Adrenal gland (tissue), 19 donors: ENCODE measurements at regions of chr12 and their contacts with region 1.

Region 1: GRCh38 chr12:56518570-56518969 is 3.0 kb upstream of the RBMS2 start:
- DNase-seq: no peak
- H3K4me3 ChIP-seq: no peak overlapping the region
- H3K27ac ChIP-seq: no peak overlapping the region
- H3K4me1 ChIP-seq: peaks cover 10 to 32% of the 10 kb centered on the region in 2 donors
- H3K27me3 ChIP-seq: no peaks in the 10 kb centered on the region
- CTCF ChIP-seq: no peak
- POLR2A ChIP-seq: no peak

Region 2: DNA sequence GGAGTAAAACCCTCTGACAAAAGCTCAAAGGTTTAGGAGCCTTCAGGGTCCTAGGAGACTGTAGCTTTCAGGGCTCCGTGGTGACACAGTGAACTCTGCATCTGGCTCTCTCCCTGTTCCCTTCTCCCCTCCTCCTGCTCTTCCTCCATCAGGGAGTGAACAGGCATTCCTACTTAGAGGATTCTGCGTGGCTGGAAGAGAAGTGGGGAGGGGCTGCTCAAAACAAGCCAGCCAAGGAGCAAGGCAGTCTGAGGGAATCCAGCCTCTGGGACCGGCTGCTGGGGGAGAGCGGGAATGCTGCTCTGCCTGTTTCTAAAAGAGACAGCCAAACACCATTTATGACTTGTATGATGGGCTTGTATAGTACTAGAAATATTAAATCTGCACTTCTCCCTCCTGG is 52.6 kb after region 1 on chr12:
- intact Hi-C with region 1: loop called in 1 of 2 experiments (anchors 5 kb)
- DNase-seq: no peak
- H3K4me3 ChIP-seq: no peak overlapping the region
- H3K27ac ChIP-seq: peak overlapping the region in 2 of 5 donors; percentile 26 to 35
- H3K4me1 ChIP-seq: peaks cover 3 to 9% of the 10 kb centered on the region in 2 donors
- H3K27me3 ChIP-seq: no peaks in the 10 kb centered on the region
- CTCF ChIP-seq: no peak
- POLR2A ChIP-seq: no peak

Region 3: DNA sequence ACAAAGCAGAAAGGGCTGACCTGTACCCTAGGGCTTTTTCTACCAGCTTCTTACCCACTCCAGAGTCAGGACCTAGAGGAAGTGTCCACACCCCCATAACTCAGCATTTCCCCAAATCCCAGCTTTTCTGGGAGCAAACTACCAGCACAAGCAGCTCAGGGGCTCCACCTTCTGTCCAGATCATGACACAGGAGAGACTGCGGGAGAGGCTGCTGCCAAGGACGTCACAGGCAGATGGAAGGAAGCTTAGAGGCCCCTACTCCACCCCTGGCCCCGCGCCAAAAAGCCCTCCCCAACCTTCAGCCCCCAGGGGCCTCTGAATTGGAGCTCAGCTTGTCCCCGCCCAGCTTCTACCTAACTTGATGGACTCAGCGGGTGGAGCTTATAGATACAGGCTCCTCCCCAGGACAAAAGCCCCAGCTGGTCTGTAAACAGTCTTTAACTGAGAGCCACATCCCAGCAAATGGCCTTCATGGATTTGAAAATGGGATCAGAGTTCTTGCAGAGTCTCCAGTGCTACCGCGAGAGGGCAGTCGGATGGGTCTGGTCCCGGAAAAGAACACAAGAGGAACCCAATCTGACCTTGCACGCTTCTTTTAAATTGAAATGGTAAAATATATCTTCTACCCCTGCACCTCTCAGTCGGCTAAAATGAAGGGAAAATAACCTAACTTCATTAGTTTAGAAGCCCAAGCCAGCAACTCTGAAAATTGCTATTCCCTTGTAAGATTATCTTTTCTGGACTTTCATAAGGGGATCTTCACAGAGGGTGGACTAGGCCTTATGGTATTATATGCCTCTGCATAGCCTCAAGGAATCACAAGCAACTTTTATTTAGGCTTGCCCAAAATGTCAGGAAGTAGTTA is 118.3 kb after region 1 on chr12:
- intact Hi-C with region 1: loop called in 1 of 2 experiments (anchors 10 kb)
- DNase-seq: peak; percentile 99 to 100 (median 99)
- H3K4me3 ChIP-seq: peak overlapping the region in 2 of 4 donors; percentile 78 to 84
- H3K27ac ChIP-seq: peak overlapping the region; percentile 61 to 96 (median 94)
- H3K4me1 ChIP-seq: peaks cover 33 to 46% of the 10 kb centered on the region in 2 donors
- H3K27me3 ChIP-seq: no peaks in the 10 kb centered on the region
- CTCF ChIP-seq: peak; percentile 40 to 77 (median 64)
- POLR2A ChIP-seq: peak in 1 of 2 donors; percentile 73